CD4-positive, alpha-beta memory T cell (primary cell): ENCODE measurements at regions of chr14 and their contacts with region 1.

Region 1: DNA sequence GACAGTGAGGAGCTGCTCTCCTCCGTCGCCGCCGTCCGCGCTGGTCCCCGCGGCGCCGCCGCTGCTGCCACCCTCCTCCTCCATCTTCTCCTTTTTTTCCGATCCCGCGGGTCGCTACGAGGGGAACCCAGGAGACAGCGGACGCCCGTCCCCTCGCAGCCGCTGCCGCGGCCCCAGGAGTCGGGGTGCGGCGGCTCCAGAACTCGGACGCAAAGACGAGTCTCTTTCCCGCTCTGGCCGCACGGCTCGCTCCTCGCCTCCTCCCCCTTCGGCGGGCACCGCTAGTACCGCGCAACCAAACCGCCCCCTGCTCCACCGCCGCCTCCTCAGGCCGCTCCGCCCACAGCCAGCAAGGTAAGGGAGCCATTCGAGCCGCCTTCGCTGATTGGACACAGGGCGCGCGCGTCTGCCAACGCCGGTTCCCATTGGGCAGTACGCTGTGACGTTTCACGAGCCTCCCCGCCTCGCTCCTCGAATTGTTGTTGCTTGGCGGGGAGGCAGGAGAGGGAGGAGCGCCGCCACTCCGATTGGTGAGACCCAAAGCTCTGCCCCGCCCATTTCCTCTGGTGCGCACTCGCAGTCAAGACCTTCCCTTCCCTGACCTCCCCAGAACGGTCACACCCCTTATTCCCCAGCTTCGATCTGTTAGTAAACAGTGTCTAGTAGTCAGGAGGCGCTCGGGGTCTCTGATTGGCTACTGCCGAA is at the start of gene RPS6KA5:
- DNase-seq: peak; percentile 99 to 100 (median 100)
- H3K4me3 ChIP-seq: peak within 1 kb of the TSS; percentile 17 to 78
- H3K4me3 Mint-ChIP-seq: peak within 1 kb of the TSS; percentile 87 to 90 (median 88)
- H3K27ac ChIP-seq: peak within 1 kb of the TSS; percentile 63
- H3K27ac Mint-ChIP-seq: peak within 1 kb of the TSS; percentile 73 to 90 (median 80)
- H3K4me1 ChIP-seq: peaks cover 67% of the 10 kb centered on the region
- H3K4me1 Mint-ChIP-seq: peaks cover 44 to 72% (median 57%) of the 10 kb centered on the region in 4 donors
- H3K27me3 ChIP-seq: no peaks in the 10 kb centered on the region
- H3K27me3 Mint-ChIP-seq: no peaks in the 10 kb centered on the region
- total RNA-seq, gene RPS6KA5: 42.9 to 44.7 TPM

Region 2: DNA sequence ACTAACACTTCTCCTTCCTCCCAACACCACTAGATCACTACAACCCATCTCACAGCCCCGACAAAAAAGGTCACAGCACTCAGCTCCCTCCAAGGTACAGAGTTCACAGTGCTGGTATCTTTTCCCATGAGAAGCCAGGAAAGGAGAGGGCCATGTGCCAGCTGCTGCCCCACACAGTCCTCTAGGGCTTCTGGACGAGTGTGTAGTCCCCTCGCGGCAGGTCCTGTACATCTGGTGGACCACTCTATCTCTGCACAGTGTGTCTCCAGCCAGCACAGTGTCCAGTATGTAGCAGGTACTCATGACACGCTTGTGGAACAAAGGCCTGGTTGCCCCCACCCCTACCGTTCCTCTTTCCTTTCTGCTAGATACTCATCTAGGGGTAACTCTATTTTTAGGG is 1509.1 kb before region 1 on chr14:
- CTCF ChIA-PET with region 1: no interaction called
- POLR2A ChIA-PET with region 1: no interaction called
- intact Hi-C with region 1: no loop called
- DNase-seq: no peak
- H3K4me3 ChIP-seq: no peak overlapping the region
- H3K4me3 Mint-ChIP-seq: no peak overlapping the region
- H3K27ac ChIP-seq: no peak overlapping the region
- H3K27ac Mint-ChIP-seq: peak overlapping the region in 3 of 7 donors; percentile 5 to 73 (median 48)
- H3K4me1 ChIP-seq: peaks cover 3% of the 10 kb centered on the region
- H3K4me1 Mint-ChIP-seq: peaks cover 31 to 58% (median 42%) of the 10 kb centered on the region in 4 donors
- H3K27me3 ChIP-seq: no peaks in the 10 kb centered on the region
- H3K27me3 Mint-ChIP-seq: no peaks in the 10 kb centered on the region

Region 3: GRCh38 chr14:90758028-90758889 is 302.2 kb before region 1 on chr14:
- CTCF ChIA-PET with region 1: no interaction called
- POLR2A ChIA-PET with region 1: no interaction called
- intact Hi-C with region 1: loop called (anchors 5 kb)
- DNase-seq: peak; percentile 88 to 95 (median 93)
- H3K4me3 ChIP-seq: peak overlapping the region; percentile 58 to 69
- H3K4me3 Mint-ChIP-seq: peak overlapping the region; percentile 86 to 94 (median 88)
- H3K27ac ChIP-seq: peak overlapping the region; percentile 55
- H3K27ac Mint-ChIP-seq: peak overlapping the region; percentile 87 to 96 (median 94)
- H3K4me1 ChIP-seq: peaks cover 18% of the 10 kb centered on the region
- H3K4me1 Mint-ChIP-seq: peaks cover 7 to 23% (median 12%) of the 10 kb centered on the region in 4 donors
- H3K27me3 ChIP-seq: no peaks in the 10 kb centered on the region
- H3K27me3 Mint-ChIP-seq: peaks cover 3 to 5% of the 10 kb centered on the region in 2 donors

Region 4: GRCh38 chr14:90936757-90937440 is 123.6 kb before region 1 on chr14:
- CTCF ChIA-PET with region 1: no interaction called
- POLR2A ChIA-PET with region 1: no interaction called
- intact Hi-C with region 1: no loop called
- DNase-seq: no peak
- H3K4me3 ChIP-seq: no peak overlapping the region
- H3K4me3 Mint-ChIP-seq: no peak overlapping the region
- H3K27ac ChIP-seq: no peak overlapping the region
- H3K27ac Mint-ChIP-seq: peak overlapping the region in 3 of 7 donors; percentile 28 to 71 (median 51)
- H3K4me1 ChIP-seq: no peaks in the 10 kb centered on the region
- H3K4me1 Mint-ChIP-seq: peaks cover 0 to 4% (median 3%) of the 10 kb centered on the region in 4 donors
- H3K27me3 ChIP-seq: no peaks in the 10 kb centered on the region
- H3K27me3 Mint-ChIP-seq: no peaks in the 10 kb centered on the region

Region 5: GRCh38 chr14:91021991-91022621 is 38.4 kb before region 1 on chr14:
- CTCF ChIA-PET with region 1: no interaction called
- POLR2A ChIA-PET with region 1: interaction called, 6 read pairs
- intact Hi-C with region 1: loop called (anchors 5 kb)
- DNase-seq: no peak
- H3K4me3 ChIP-seq: peak overlapping the region; percentile 46 to 50
- H3K4me3 Mint-ChIP-seq: peak overlapping the region; percentile 81 to 91 (median 85)
- H3K27ac ChIP-seq: peak overlapping the region; percentile 73
- H3K27ac Mint-ChIP-seq: peak overlapping the region; percentile 67 to 97 (median 94)
- H3K4me1 ChIP-seq: peaks cover 40% of the 10 kb centered on the region
- H3K4me1 Mint-ChIP-seq: peaks cover 36 to 77% (median 47%) of the 10 kb centered on the region in 4 donors
- H3K27me3 ChIP-seq: no peaks in the 10 kb centered on the region
- H3K27me3 Mint-ChIP-seq: no peaks in the 10 kb centered on the region

Region 6: GRCh38 chr14:91114079-91115065 is 53.9 kb after region 1 on chr14:
- CTCF ChIA-PET with region 1: interaction called, 74 read pairs
- POLR2A ChIA-PET with region 1: interaction called, 3 read pairs
- intact Hi-C with region 1: loop called (anchors 1 kb)
- DNase-seq: peak; percentile 64 to 82 (median 74)
- H3K4me3 ChIP-seq: peak overlapping the region; percentile 85 to 95
- H3K4me3 Mint-ChIP-seq: peak overlapping the region; percentile 88 to 99 (median 94)
- H3K27ac ChIP-seq: peak overlapping the region; percentile 94
- H3K27ac Mint-ChIP-seq: peak overlapping the region; percentile 94 to 99 (median 97)
- H3K4me1 ChIP-seq: peaks cover 72% of the 10 kb centered on the region
- H3K4me1 Mint-ChIP-seq: peaks cover 54 to 84% (median 69%) of the 10 kb centered on the region in 4 donors
- H3K27me3 ChIP-seq: no peaks in the 10 kb centered on the region
- H3K27me3 Mint-ChIP-seq: no peaks in the 10 kb centered on the region

Region 7: GRCh38 chr14:91244501-91244901 is 184.0 kb after region 1 on chr14 and contains the start of gene GPR68:
- CTCF ChIA-PET with region 1: no interaction called
- POLR2A ChIA-PET with region 1: interaction called, 9 read pairs
- intact Hi-C with region 1: loop called (anchors 1 kb)
- DNase-seq: peak in 4 of 5 donors; percentile 40 to 69 (median 43)
- H3K4me3 ChIP-seq: peak within 1 kb of the TSS; percentile 66 to 96
- H3K4me3 Mint-ChIP-seq: peak within 1 kb of the TSS; percentile 91 to 99 (median 94)
- H3K27ac ChIP-seq: peak within 1 kb of the TSS; percentile 99
- H3K27ac Mint-ChIP-seq: peak within 1 kb of the TSS; percentile 92 to 100 (median 99)
- H3K4me1 ChIP-seq: peaks cover 94% of the 10 kb centered on the region
- H3K4me1 Mint-ChIP-seq: peaks cover 64 to 98% (median 82%) of the 10 kb centered on the region in 4 donors
- H3K27me3 ChIP-seq: no peaks in the 10 kb centered on the region
- H3K27me3 Mint-ChIP-seq: no peaks in the 10 kb centered on the region
- total RNA-seq, gene GPR68: 10.6 to 10.8 TPM